GM10248 (cell line): ENCODE measurements at regions of chr12 and their contacts with region 1.

Region 1: DNA sequence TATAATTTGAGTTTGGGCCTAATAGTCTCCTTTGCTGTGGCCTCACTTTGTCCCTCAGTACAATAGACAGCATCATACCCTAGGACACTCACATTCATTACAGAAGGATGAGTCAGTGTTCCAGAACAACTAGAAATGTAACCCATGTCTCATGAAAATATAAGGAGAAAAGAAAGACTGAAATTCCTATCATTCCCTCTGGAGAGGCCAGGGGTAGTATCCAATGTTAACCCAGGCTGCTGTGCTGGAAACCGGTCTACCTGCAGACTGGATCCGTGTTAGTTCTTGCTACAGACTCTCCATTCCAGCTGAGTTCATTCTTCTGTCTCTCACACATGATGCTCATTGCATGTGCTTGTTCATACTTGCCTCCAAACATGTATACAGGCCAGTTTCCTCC is 75.8 kb upstream of the HOXC13 start:
- DNase-seq: no peak
- CTCF ChIP-seq: no peak

Region 2: GRCh38 chr12:53852061-53852460 is 10.8 kb before region 1 on chr12:
- CTCF ChIA-PET with region 1: interaction called, 14 read pairs
- POLR2A ChIA-PET with region 1: no interaction called
- DNase-seq: no peak
- CTCF ChIP-seq: no peak